ENCODE measurements at regions of chr1 and their contacts with region 1.

Region 1: GRCh38 chr1:37479255-37480124 is 5.1 kb downstream of the ZC3H12A start:
- DNase-seq: peak; percentile 96
- ATAC-seq: peak; percentile 52
- H3K4me3 Mint-ChIP-seq: peak overlapping the region; percentile 95
- H3K27ac Mint-ChIP-seq: peak overlapping the region; percentile 98
- H3K4me1 Mint-ChIP-seq: peaks cover 32% of the 10 kb centered on the region
- H3K27me3 Mint-ChIP-seq: no peaks in the 10 kb centered on the region

Region 2: DNA sequence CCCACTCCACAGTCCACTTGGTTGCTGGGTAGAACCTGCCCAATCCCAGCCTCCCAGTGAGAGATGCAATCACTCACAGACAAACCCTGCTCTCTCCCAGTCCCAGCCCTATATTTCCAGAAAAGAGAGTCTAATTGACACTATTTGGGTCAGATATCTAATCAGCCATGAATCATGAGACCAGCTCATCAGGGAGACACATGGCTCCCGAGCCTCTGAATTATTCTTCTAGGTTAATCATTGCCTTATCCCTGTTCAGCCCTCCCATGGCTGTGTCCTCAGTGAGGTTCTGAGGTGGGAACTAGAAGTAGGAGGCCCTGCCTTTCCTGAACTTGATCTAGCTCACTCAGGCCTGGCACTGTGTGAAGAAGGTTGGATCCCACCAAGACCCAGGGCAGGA is 55.0 kb before region 1 on chr1:
- CTCF ChIA-PET with region 1: no interaction called
- POLR2A ChIA-PET with region 1: no interaction called
- intact Hi-C with region 1: no loop called
- DNase-seq: no peak
- ATAC-seq: no peak
- H3K4me3 Mint-ChIP-seq: no peak overlapping the region
- H3K27ac Mint-ChIP-seq: no peak overlapping the region
- H3K4me1 Mint-ChIP-seq: no peaks in the 10 kb centered on the region
- H3K27me3 Mint-ChIP-seq: no peaks in the 10 kb centered on the region

Region 3: GRCh38 chr1:37458528-37458927 is 21.0 kb before region 1 on chr1:
- CTCF ChIA-PET with region 1: interaction called, 194 read pairs
- POLR2A ChIA-PET with region 1: interaction called, 13 read pairs
- intact Hi-C with region 1: no loop called
- DNase-seq: no peak
- ATAC-seq: no peak
- H3K4me3 Mint-ChIP-seq: no peak overlapping the region
- H3K27ac Mint-ChIP-seq: no peak overlapping the region
- H3K4me1 Mint-ChIP-seq: peaks cover 7% of the 10 kb centered on the region
- H3K27me3 Mint-ChIP-seq: no peaks in the 10 kb centered on the region

Region 4: GRCh38 chr1:37465593-37466517 is 13.6 kb before region 1 on chr1:
- CTCF ChIA-PET with region 1: interaction called, 194 read pairs
- POLR2A ChIA-PET with region 1: interaction called, 13 read pairs
- intact Hi-C with region 1: no loop called
- DNase-seq: no peak
- ATAC-seq: no peak
- H3K4me3 Mint-ChIP-seq: no peak overlapping the region
- H3K27ac Mint-ChIP-seq: no peak overlapping the region
- H3K4me1 Mint-ChIP-seq: peaks cover 11% of the 10 kb centered on the region
- H3K27me3 Mint-ChIP-seq: no peaks in the 10 kb centered on the region

Region 5: GRCh38 chr1:37514350-37515184 is 35.1 kb after region 1 on chr1 and contains the start of gene MEAF6:
- CTCF ChIA-PET with region 1: interaction called, 19 read pairs
- POLR2A ChIA-PET with region 1: interaction called, 13 read pairs
- intact Hi-C with region 1: loop called (anchors 1 kb)
- DNase-seq: peak; percentile 91
- ATAC-seq: peak; percentile 88
- H3K4me3 Mint-ChIP-seq: peak within 1 kb of the TSS; percentile 87
- H3K27ac Mint-ChIP-seq: peak within 1 kb of the TSS; percentile 93
- H3K4me1 Mint-ChIP-seq: peaks cover 41% of the 10 kb centered on the region
- H3K27me3 Mint-ChIP-seq: no peaks in the 10 kb centered on the region
- total RNA-seq, gene MEAF6: 66.8 to 72.2 TPM

Region 6: GRCh38 chr1:37553927-37554808 is 74.7 kb after region 1 on chr1 and contains the start of gene SNIP1:
- CTCF ChIA-PET with region 1: no interaction called
- POLR2A ChIA-PET with region 1: interaction called, 8 read pairs
- intact Hi-C with region 1: loop called (anchors 1 to 5 kb)
- DNase-seq: peak; percentile 95
- ATAC-seq: peak; percentile 93
- H3K4me3 Mint-ChIP-seq: peak within 1 kb of the TSS; percentile 92
- H3K27ac Mint-ChIP-seq: peak within 1 kb of the TSS; percentile 95
- H3K4me1 Mint-ChIP-seq: peaks cover 36% of the 10 kb centered on the region
- H3K27me3 Mint-ChIP-seq: no peaks in the 10 kb centered on the region
- total RNA-seq, gene SNIP1: 18.7 to 21.3 TPM

Region 7: DNA sequence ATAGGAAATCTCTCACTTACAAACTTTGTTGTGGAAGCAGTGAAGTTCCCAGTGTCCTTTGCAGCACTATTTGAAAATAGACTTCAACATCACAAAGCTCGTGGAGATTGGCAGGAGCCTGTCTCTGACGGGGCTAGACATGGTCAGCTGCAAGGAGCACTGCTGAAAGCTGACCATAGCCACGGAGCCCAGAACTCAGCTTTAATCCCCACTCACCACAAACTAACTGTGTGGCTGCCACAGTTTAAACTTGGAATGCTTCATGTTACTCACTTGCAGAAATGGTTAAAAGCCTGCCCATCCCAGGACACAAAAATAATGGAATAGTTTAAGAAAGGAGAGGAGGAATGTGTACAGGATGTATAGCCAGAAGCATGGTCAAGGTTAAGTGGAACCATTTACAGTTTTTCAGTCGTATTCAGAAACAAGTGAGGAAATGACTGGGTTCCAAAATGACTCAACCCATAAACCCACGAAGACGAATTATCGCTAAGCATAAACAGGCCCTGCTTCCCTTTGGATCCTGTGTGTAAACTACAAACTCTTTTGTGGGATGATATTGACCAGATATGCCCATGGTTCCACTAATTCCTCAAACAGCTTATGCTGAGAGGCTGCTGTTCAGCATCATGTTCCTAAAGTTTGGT is 95.5 kb after region 1 on chr1:
- CTCF ChIA-PET with region 1: interaction called, 3 read pairs
- POLR2A ChIA-PET with region 1: interaction called, 4 read pairs
- intact Hi-C with region 1: loop called in 1 of 2 experiments (anchors 5 kb)
- DNase-seq: peak; percentile 26
- ATAC-seq: peak; percentile 56
- H3K4me3 Mint-ChIP-seq: no peak overlapping the region
- H3K27ac Mint-ChIP-seq: peak overlapping the region; percentile 90
- H3K4me1 Mint-ChIP-seq: peaks cover 55% of the 10 kb centered on the region
- H3K27me3 Mint-ChIP-seq: no peaks in the 10 kb centered on the region

Measured in activated CD4-positive, alpha-beta T cell treated with anti-CD3 and anti-CD28 coated beads for 36 hours (primary cell).